Caco-2 (cell line): ENCODE measurements at regions of chr2 and their contacts with region 1.

Region 1: DNA sequence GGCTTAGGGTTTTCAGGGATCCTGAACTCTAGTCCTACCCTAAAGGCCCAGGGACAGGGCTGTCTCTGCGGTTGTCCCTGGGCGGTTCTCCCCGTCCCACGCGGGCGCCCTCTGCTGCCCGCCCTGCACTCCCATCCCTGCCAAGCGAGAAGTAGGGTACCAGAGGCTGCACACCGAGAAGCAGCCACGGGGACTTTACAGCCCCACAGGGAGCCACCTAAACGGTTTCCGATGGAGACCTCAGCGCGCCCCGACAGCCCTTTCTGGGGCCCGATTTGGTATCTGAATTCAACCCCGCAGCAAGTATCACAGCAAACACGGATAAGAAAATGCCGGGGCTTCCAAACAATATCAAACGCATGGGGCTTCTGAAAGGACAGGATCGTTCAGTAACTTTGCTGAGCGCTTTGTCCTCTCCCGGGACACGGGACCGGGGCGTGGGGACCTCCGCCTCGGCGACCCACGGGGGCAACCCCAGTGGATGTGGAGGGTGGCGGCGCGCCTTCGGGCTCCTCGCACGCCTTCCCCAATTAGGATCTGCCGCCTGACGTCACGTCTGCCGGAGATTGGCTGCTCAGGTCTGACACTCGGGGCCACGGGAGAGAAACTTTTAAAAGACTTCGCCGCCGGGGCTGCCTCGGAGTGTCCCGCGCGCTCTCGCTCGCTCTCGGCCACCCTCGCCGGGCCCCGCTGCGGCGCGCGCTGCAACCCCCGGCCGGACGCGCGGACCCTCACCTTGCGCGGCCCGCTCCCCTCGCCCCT is at the start of gene LTBP1:
- DNase-seq: peak; percentile 79 to 84
- H3K4me3 ChIP-seq: peak within 1 kb of the TSS; percentile 71
- H3K4me3 Mint-ChIP-seq: peak within 1 kb of the TSS; percentile 79
- H3K27ac Mint-ChIP-seq: peak within 1 kb of the TSS; percentile 69
- H3K4me1 ChIP-seq: peaks cover 8% of the 10 kb centered on the region; the same call in 1 of the 2 replicates
- H3K4me1 Mint-ChIP-seq: peaks cover 7% of the 10 kb centered on the region
- H3K27me3 ChIP-seq: no peaks in the 10 kb centered on the region
- H3K27me3 Mint-ChIP-seq: no peaks in the 10 kb centered on the region
- CTCF ChIP-seq: peak; percentile 83 to 94
- total RNA-seq, gene LTBP1: 64.2 and 64.9 TPM in 2 replicates

Region 2: GRCh38 chr2:32627814-32628579 is 318.5 kb before region 1 on chr2 and contains the start of gene TTC27:
- CTCF ChIA-PET with region 1: no interaction called
- POLR2A ChIA-PET with region 1: no interaction called
- intact Hi-C with region 1: loop called (anchors 10 kb)
- DNase-seq: peak; percentile 97
- H3K4me3 ChIP-seq: peak within 1 kb of the TSS; percentile 81
- H3K4me3 Mint-ChIP-seq: peak within 1 kb of the TSS; percentile 91
- H3K27ac Mint-ChIP-seq: peak within 1 kb of the TSS; percentile 92
- H3K4me1 ChIP-seq: no peaks in the 10 kb centered on the region; the same call in 1 of the 2 replicates
- H3K4me1 Mint-ChIP-seq: peaks cover 9% of the 10 kb centered on the region
- H3K27me3 ChIP-seq: no peaks in the 10 kb centered on the region
- H3K27me3 Mint-ChIP-seq: no peaks in the 10 kb centered on the region
- CTCF ChIP-seq: peak in 1 of 2 experiments; percentile 9
- total RNA-seq, gene TTC27: 18.9 and 20.6 TPM in 2 replicates

Region 3: DNA sequence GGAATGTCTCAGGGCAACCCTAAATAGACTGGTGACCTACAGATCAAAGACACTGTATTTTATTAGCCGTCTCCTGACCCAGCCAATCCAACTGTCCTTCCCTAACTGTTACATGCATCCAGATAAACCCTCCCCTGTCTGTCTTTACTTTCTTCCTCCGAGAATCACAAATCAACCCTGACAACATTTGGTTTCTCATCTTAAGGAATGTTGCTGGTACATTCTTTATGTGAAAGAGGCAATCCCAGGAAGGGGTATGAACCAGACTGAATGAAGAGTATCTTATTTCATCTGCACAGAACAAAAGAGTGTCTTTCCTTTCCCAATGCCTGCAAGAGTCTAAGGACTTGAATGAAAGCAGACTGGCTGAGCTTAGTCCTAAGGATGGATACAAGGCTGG is 113.7 kb before region 1 on chr2:
- CTCF ChIA-PET with region 1: interaction called, 4 read pairs
- POLR2A ChIA-PET with region 1: no interaction called
- intact Hi-C with region 1: loop called (anchors 1 kb)
- DNase-seq: peak; percentile 68 to 70
- H3K4me3 ChIP-seq: no peak overlapping the region
- H3K4me3 Mint-ChIP-seq: peak overlapping the region; percentile 56
- H3K27ac Mint-ChIP-seq: peak overlapping the region; percentile 84
- H3K4me1 ChIP-seq: peaks cover 45% of the 10 kb centered on the region
- H3K4me1 Mint-ChIP-seq: peaks cover 51% of the 10 kb centered on the region
- H3K27me3 ChIP-seq: no peaks in the 10 kb centered on the region
- H3K27me3 Mint-ChIP-seq: no peaks in the 10 kb centered on the region
- CTCF ChIP-seq: no peak

Region 4: DNA sequence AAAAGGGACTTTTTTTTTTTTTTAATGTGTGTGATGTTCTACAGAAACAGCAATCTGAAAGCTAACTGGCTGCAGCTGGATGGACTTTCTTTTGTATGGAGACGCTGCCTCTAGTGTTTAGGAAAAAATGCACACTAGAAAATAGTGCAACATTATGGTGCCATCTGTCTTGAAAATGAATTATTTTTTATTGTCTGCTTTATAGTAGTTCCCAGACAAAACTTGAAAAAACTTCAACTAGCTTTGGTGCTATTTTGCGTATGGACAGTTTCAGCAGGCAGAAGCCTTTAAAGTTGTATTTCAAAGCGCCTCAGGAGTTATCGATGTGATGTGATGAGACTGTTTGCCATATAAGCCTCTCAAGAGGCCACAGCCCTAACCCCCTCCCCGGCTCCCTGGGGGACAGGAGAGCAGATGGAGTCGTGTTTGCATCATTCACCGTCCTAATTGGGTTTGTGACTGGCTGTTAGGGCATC is 87.1 kb after region 1 on chr2:
- CTCF ChIA-PET with region 1: interaction called, 4 read pairs
- POLR2A ChIA-PET with region 1: interaction called, 4 read pairs
- intact Hi-C with region 1: loop called (anchors 1 kb)
- DNase-seq: peak in 1 of 2 experiments; percentile 50
- H3K4me3 ChIP-seq: no peak overlapping the region
- H3K4me3 Mint-ChIP-seq: no peak overlapping the region
- H3K27ac Mint-ChIP-seq: no peak overlapping the region
- H3K4me1 ChIP-seq: no peaks in the 10 kb centered on the region
- H3K4me1 Mint-ChIP-seq: peaks cover 6% of the 10 kb centered on the region
- H3K27me3 ChIP-seq: no peaks in the 10 kb centered on the region
- H3K27me3 Mint-ChIP-seq: no peaks in the 10 kb centered on the region
- CTCF ChIP-seq: peak; percentile 59 to 73

Region 5: DNA sequence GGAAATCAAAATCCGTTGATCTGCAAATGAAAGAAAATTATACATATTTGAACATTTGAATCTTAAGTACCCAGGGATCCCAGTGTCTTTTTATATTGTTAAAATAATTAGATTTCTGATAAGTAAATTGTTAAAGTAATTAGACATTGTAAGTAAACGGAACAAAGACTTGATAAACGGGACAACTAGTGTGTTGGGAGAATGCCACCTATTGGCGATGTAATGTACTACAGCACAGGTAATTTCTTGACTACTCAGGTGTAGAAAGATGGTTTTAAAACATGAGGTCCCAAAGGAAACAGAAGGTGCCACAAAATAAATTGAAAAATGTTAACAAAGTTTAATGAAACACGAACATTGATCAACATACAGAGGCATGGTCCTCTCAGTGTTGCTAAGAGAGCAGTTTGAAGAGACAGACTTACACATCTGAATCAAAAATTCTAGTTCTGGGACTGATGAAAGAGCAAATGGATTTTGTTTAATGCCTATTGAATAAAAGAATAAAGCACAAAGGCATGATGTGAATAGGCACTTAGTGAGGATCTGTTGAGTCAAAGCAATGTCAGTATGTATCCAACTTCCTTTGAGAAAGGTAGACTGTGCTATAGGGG is 426.6 kb after region 1 on chr2:
- CTCF ChIA-PET with region 1: no interaction called
- POLR2A ChIA-PET with region 1: no interaction called
- intact Hi-C with region 1: loop called (anchors 5 kb)
- DNase-seq: peak in 1 of 2 experiments; percentile 53
- H3K4me3 ChIP-seq: no peak overlapping the region
- H3K4me3 Mint-ChIP-seq: no peak overlapping the region
- H3K27ac Mint-ChIP-seq: no peak overlapping the region
- H3K4me1 ChIP-seq: no peaks in the 10 kb centered on the region
- H3K4me1 Mint-ChIP-seq: no peaks in the 10 kb centered on the region
- H3K27me3 ChIP-seq: no peaks in the 10 kb centered on the region
- H3K27me3 Mint-ChIP-seq: no peaks in the 10 kb centered on the region
- CTCF ChIP-seq: peak; percentile 74 to 75